ENCODE measurements at regions of chr2 and their contacts with region 1.

Region 1: DNA sequence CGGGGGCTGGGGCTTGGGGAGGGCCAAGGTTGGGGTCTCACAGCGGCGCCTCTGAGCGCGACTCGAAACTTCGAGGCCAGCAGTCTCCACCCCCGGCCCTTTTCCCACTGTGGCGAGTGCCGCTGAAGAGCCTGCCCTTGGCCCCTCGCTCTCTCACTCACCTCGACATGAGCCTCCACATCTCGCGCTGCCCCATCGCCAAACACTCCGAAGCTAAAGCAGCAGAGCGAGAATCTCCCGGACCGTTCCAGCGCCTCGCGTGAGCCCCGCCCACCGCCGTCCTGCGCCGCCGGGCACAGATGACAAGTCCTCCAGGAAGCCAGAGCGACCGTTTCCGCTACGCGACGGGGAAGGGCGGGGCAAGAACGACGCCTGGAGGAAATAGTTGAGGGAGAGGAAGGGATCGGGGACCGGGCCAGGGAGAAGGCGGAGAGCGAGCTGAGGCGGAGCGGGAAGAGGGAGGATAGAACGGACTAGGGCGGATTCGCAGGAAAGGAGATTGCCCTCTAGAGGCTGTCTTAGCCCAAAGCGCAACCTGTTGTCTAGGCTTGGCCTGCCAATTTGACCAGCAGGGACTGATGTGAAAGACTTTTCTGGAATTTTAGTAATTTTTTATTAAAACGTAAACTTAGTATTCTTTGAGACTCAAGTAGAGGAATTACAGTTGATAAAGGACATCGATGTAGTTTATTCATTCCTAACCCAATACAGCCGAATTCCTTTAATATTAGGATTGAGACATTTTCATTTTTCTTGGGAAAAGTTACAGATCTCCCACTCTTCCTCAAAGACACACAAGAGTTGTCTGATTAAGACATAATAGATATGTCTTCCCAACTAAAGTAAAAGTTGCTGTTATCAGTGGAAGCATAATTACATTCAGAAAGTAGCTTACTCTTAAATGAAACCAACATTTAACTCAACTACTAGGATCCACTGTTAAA is at the start of gene HIBCH:
- DNase-seq: peak; percentile 99
- total RNA-seq, gene HIBCH: 21.9 TPM

Region 2: GRCh38 chr2:190343500-190344275 is 23.9 kb after region 1 on chr2 and contains the start of gene INPP1:
- intact Hi-C with region 1: loop called (anchors 1 kb)
- DNase-seq: peak; percentile 91
- total RNA-seq, gene INPP1: 12.4 TPM

Region 3: DNA sequence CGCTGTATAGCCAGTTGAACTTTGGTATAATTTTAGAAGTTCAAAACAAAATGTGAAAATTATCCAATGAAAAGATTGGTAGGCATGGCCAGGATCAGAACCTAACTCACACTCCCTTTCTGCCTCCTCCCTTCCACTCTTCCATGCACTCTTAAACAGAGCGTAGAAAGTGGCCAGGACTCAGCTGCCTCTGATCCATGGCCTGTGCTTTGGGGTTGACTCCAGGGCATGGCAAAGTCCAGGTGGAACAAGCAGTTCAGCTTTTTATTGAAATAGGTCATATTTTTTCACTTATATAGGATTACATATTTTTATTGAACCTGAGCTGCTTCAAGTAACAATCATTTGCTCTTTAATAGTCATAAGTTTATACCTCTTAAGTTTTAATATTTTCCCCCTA is 49.8 kb after region 1 on chr2:
- intact Hi-C with region 1: loop called (anchors 5 kb)
- DNase-seq: no peak

Region 4: GRCh38 chr2:190408538-190409271 is 88.9 kb after region 1 on chr2:
- intact Hi-C with region 1: no loop called
- DNase-seq: peak; percentile 82

Region 5: GRCh38 chr2:190599073-190599472 is 279.2 kb after region 1 on chr2:
- intact Hi-C with region 1: no loop called
- DNase-seq: no peak